Breast epithelium (tissue), 4 donors: ENCODE measurements at regions of chr21 and their contacts with region 1.

Region 1: GRCh38 chr21:41387042-41387750 is 25.4 kb downstream of the MX2 start:
- DNase-seq: peak in 1 of 2 donors; percentile 28
- H3K4me3 ChIP-seq: no peak overlapping the region
- H3K27ac ChIP-seq: peak overlapping the region; percentile 72 to 89
- H3K4me1 ChIP-seq: peaks cover 0 to 4% of the 10 kb centered on the region in 2 donors
- H3K27me3 ChIP-seq: no peaks in the 10 kb centered on the region
- CTCF ChIP-seq: no peak
- POLR2A ChIP-seq: no peak

Region 2: DNA sequence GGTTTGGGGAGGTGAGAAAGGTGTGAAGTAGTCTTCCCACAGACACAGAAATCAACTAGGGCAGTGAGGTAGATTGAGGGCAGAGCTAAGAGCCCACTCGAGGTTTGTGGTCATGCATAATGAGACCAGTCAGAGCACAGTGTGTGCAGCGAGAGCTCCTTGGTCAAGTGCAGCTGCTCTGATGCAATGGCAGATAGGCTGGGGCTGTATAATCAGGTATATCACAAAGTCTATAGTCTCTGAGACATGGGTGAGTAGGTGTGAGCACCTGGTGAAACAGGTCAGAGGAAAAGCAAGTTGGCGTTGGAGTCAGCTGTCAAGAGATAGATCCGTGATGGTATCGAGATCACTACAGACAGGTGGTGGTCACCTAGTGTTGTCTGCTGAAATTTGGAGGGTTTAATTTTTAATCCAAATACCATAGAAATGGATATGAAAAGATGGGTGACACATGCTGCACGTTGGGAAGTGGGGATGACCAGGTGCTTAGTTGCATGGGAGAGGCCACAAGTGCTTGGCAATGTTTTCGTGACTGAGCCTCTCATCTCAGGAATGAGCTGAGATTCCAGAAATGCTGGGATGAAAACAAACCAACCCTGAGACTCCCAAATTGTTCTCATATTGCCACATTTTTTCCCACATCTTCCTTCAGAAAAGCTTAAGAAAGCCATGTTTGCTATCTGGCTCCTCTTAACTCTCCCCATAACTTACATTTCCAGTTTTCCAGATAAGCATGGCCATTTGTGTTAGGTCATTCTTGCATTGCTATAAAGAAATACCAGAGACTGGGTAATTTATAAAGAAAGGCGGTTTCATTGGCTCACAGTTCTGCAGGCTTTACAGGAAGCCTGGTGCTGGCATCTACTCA is 557.7 kb before region 1 on chr21:
- intact Hi-C with region 1: loop called (anchors 10 kb)
- DNase-seq: no peak
- H3K4me3 ChIP-seq: no peak overlapping the region
- H3K27ac ChIP-seq: no peak overlapping the region
- H3K4me1 ChIP-seq: no peaks in the 10 kb centered on the region
- H3K27me3 ChIP-seq: no peaks in the 10 kb centered on the region
- CTCF ChIP-seq: no peak
- POLR2A ChIP-seq: no peak

Region 3: GRCh38 chr21:41164981-41165655 is 222.1 kb before region 1 on chr21:
- intact Hi-C with region 1: no loop called
- DNase-seq: peak; percentile 80 to 87
- H3K4me3 ChIP-seq: no peak overlapping the region
- H3K27ac ChIP-seq: peak overlapping the region; percentile 87 to 92
- H3K4me1 ChIP-seq: no peaks in the 10 kb centered on the region
- H3K27me3 ChIP-seq: no peaks in the 10 kb centered on the region
- CTCF ChIP-seq: no peak
- POLR2A ChIP-seq: no peak

Region 4: DNA sequence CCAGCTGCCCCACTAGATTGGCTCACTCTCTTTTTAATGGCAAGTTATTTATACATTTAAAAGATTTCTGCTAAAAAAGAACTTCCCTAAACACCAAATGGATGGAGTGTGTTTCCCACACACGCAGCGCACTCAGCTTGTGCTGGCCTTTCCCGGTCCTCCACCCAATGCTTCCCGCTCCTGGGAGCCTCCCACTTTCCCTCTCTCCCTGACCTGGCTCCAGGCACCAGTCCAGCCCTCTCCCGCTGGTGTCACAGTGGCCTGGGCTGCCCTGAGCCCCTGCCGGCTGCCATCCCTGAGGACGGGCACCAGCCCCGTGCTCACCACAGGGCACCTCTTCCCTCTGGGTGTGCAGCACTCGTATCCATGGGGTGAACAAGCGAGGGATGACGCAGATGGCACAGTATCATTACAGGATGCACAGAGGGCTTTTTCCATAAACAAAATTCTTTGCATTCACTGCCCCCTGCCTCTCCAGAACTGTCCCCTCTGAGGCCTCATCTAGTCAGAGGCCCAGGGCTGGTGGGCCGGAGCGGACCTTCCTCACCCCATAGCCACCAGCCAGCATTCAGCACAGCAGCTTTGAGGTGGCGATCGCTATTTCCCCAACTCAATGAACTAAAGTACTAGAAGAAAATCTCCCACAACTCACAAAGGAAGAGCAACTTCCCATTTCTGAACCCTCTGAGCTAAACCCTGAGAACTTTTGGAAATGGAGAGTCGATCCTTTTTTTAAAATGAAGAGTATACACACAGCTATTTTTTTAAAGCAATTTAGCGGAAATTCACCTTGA is 1195.0 kb after region 1 on chr21:
- intact Hi-C with region 1: no loop called
- DNase-seq: peak in 1 of 2 donors; percentile 36
- H3K4me3 ChIP-seq: no peak overlapping the region
- H3K27ac ChIP-seq: no peak overlapping the region
- H3K4me1 ChIP-seq: no peaks in the 10 kb centered on the region
- H3K27me3 ChIP-seq: no peaks in the 10 kb centered on the region
- CTCF ChIP-seq: no peak
- POLR2A ChIP-seq: no peak